Endothelial cell of umbilical vein (primary cell): ENCODE measurements at regions of chr1 and their contacts with region 1.

Region 1: GRCh38 chr1:1231400-1232223 is at the start of gene SDF4:
- DNase-seq: peak; percentile 97
- H3K4me3 ChIP-seq: peak within 1 kb of the TSS; percentile 54 to 88 (median 80)
- H3K27ac ChIP-seq: peak within 1 kb of the TSS; percentile 39
- H3K4me1 ChIP-seq: peaks cover 6% of the 10 kb centered on the region
- H3K27me3 ChIP-seq: no peaks in the 10 kb centered on the region
- CTCF ChIP-seq: no peak
- POLR2A ChIP-seq: peak; percentile 94
- total RNA-seq, gene SDF4: 171 and 185 TPM in 2 replicates

Region 2: DNA sequence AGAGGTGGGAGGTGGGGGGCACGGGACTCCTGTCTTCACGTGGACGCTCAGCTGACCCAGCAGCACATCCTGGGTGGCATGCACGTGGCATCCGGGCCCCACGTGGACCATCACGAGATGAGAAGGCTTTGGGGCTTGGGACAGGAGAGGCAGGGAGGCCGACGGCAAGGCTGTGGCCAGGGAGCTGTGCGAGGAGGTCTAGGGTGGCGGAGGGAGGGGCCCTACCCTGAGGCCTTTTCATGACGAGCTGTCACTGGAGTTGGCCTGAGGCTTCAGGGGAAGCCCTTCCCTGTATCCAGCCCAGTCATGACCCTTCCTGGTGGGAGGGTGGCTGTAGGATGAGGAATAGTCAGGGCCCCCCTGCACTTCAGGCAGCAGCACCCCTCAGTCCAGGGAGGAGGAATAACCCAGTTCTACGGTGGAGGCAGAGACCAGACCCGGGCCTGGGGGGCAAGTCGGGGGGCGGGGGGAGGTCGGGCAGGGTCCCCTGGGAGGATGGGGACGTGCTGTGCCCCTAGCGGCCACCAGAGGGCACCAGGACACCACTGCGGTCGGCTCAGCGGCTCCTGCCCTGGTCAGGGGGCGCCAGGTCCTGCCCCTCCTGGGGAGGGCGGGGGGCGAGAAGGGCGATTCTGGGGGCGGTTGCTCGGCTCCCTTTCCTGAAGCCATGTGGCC is 247.7 kb before region 1 on chr1:
- CTCF ChIA-PET with region 1: interaction called, 11 read pairs
- POLR2A ChIA-PET with region 1: no interaction called
- dilution Hi-C with region 1: no loop called
- intact Hi-C with region 1: no loop called
- DNase-seq: no peak
- H3K4me3 ChIP-seq: no peak overlapping the region
- H3K27ac ChIP-seq: no peak overlapping the region
- H3K4me1 ChIP-seq: no peaks in the 10 kb centered on the region
- H3K27me3 ChIP-seq: peaks cover 2 to 3% of the 10 kb centered on the region in 2 experiments
- CTCF ChIP-seq: peak; percentile 30 to 92
- POLR2A ChIP-seq: no peak

Region 3: DNA sequence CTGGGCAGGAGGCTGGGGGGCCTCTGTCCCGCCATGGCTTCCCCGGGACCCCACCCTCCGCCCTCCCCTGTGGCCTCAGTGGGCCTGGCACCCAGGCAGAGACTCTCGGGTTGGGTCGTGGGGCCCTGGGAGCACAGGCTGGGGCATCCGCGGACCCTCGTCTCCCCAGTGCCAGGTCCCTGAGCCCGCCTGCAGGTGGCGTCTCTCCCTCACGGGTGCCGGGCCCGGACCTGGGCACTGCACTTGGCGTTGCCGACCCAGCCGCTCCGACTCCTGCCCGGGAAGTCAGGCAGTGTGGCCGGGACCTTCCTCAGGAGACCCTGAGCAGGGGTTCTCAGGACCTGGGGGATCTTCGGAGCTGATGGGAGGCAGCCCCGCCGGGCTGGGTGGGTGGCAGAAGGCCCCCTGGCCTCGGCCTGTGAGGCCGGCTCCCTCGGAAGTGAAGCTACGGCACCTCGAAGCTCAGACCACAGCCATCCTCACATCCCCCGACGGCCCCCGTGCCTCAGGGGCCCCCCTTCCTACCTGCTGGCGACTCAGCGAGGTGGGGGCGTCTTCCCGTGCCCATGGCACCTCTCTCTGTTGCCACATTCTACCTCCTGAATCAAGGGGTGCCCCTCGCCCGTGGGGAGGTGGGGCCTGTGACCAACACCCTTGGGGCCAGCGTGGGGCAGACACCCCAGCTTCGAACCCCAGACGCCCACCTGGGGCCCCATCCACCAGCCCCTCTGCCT is 109.4 kb before region 1 on chr1:
- CTCF ChIA-PET with region 1: interaction called, 43 read pairs
- POLR2A ChIA-PET with region 1: interaction called, 3 read pairs
- dilution Hi-C with region 1: no loop called
- intact Hi-C with region 1: loop called (anchors 1 kb)
- DNase-seq: peak; percentile 57
- H3K4me3 ChIP-seq: peak overlapping the region in 1 of 3 experiments; percentile 6
- H3K27ac ChIP-seq: no peak overlapping the region
- H3K4me1 ChIP-seq: no peaks in the 10 kb centered on the region
- H3K27me3 ChIP-seq: peaks cover 0 to 2% of the 10 kb centered on the region in 2 experiments
- CTCF ChIP-seq: peak; percentile 80 to 98
- POLR2A ChIP-seq: no peak

Region 4: GRCh38 chr1:1212780-1213344 is 18.8 kb before region 1 on chr1:
- CTCF ChIA-PET with region 1: interaction called, 4 read pairs
- POLR2A ChIA-PET with region 1: no interaction called
- dilution Hi-C with region 1: no loop called
- intact Hi-C with region 1: loop called (anchors 2 kb)
- DNase-seq: peak; percentile 39
- H3K4me3 ChIP-seq: no peak overlapping the region
- H3K27ac ChIP-seq: no peak overlapping the region
- H3K4me1 ChIP-seq: no peaks in the 10 kb centered on the region
- H3K27me3 ChIP-seq: no peaks in the 10 kb centered on the region
- CTCF ChIP-seq: no peak
- POLR2A ChIP-seq: no peak

Region 5: DNA sequence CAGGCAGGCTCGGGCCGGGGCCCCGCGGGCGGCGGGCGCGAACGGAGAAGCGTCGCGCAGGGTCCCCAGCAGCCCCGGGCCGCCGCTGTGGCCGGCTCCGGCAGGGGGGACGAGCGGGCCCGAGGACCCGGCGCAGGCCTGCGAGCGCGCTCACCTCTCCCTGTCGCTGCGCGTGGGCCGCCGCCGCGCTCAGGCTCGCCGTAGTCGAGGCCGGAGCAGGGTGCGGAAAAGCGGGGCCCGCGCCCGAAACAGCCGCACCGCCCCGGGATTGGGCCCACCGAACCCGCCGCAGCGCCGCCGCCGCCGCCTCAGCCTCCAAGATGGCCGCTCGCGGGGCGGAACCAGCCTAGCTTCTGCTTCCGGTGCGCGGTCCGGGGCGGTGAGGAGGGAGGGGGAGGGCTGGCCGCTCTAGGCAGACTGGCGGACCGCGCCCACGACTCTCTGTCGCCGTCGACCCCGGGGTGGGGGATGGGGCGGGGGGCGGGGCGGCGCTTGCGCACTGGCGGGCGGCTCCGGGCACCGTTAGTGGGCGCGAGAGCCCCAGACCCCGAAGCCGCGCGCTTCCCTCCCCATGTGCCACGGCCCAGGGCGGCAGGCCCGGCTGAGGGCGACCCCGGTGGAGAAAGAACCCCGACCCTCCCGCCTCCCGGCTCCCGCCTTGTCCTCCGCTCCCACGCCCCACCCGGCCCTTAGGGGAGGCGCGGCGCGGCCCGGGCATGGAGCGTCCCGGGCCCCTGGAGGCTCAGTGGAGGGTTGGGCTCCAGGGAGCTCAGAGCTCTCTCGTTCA is 42.1 kb after region 1 on chr1 and contains the start of gene UBE2J2:
- CTCF ChIA-PET with region 1: no interaction called
- POLR2A ChIA-PET with region 1: interaction called, 3 read pairs
- dilution Hi-C with region 1: no loop called
- intact Hi-C with region 1: loop called (anchors 2 kb)
- DNase-seq: peak; percentile 84
- H3K4me3 ChIP-seq: peak within 1 kb of the TSS; percentile 47 to 72 (median 64)
- H3K27ac ChIP-seq: peak within 1 kb of the TSS; percentile 69
- H3K4me1 ChIP-seq: peaks cover 24% of the 10 kb centered on the region
- H3K27me3 ChIP-seq: no peaks in the 10 kb centered on the region
- CTCF ChIP-seq: peak in 1 of 2 donors; percentile 3
- POLR2A ChIP-seq: peak; percentile 84
- total RNA-seq, gene UBE2J2: 80.7 and 87.2 TPM in 2 replicates

Region 6: GRCh38 chr1:1283821-1284220 is 52.2 kb after region 1 on chr1:
- CTCF ChIA-PET with region 1: no interaction called
- POLR2A ChIA-PET with region 1: no interaction called
- dilution Hi-C with region 1: no loop called
- intact Hi-C with region 1: no loop called
- DNase-seq: no peak
- H3K4me3 ChIP-seq: no peak overlapping the region
- H3K27ac ChIP-seq: no peak overlapping the region
- H3K4me1 ChIP-seq: peaks cover 2% of the 10 kb centered on the region
- H3K27me3 ChIP-seq: no peaks in the 10 kb centered on the region
- CTCF ChIP-seq: no peak
- POLR2A ChIP-seq: no peak

Region 7: DNA sequence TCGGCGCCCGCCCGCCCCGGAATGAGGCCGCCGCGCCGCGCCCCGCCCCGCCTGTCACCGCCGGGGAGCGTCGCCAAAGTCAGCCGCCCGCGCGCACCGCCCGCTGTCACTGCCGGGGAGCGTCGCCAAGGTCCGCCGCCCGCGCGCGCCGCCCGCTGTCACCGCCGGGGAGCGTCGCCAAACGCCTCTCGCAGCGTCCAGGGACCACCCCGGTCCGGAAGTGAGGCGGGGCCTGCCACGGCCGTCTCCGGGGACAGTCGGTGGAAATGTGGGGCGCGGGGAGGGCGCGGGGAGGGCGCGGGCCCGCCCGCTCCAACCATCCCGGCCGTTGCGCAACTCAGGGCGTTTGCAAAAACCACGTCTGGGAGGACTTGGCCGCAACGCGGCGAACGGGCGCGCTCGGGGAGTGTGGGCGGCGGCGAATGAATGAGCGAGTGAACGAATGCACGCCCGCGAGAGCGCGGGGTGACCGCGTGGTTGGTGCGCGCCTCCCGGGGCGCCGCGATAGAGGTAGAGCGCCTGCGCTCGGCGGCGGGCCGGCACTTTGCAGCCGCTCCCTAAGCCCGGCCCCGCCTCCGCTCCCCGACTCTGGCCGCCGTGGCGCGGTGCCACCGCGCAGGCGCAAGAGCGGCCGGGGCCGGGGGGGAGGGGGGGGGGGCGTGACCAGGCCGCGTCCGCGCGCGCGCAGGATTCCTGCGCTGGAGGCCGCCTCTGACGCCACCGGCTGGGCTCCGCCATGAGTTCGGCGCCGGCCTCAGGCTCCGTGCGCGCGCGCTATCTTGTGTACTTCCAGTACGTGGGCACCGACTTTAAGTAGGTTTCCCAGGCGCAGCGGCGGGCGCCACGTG is 76.5 kb after region 1 on chr1 and contains the starts of genes ACAP3 and PUSL1:
- CTCF ChIA-PET with region 1: no interaction called
- POLR2A ChIA-PET with region 1: no interaction called
- dilution Hi-C with region 1: no loop called
- intact Hi-C with region 1: loop called (anchors 1 kb)
- DNase-seq: peak; percentile 80
- H3K4me3 ChIP-seq: peak within 1 kb of the TSS; percentile 56 to 94 (median 66)
- H3K27ac ChIP-seq: peak within 1 kb of the TSS; percentile 65
- H3K4me1 ChIP-seq: peaks cover 15% of the 10 kb centered on the region
- H3K27me3 ChIP-seq: no peaks in the 10 kb centered on the region
- CTCF ChIP-seq: no peak
- POLR2A ChIP-seq: peak; percentile 44
- total RNA-seq, gene ACAP3: 39.0 and 43.0 TPM in 2 replicates
- total RNA-seq, gene PUSL1: 16.6 and 18.8 TPM in 2 replicates